ENCODE measurements at regions of chr16 and their contacts with region 1.

Region 1: DNA sequence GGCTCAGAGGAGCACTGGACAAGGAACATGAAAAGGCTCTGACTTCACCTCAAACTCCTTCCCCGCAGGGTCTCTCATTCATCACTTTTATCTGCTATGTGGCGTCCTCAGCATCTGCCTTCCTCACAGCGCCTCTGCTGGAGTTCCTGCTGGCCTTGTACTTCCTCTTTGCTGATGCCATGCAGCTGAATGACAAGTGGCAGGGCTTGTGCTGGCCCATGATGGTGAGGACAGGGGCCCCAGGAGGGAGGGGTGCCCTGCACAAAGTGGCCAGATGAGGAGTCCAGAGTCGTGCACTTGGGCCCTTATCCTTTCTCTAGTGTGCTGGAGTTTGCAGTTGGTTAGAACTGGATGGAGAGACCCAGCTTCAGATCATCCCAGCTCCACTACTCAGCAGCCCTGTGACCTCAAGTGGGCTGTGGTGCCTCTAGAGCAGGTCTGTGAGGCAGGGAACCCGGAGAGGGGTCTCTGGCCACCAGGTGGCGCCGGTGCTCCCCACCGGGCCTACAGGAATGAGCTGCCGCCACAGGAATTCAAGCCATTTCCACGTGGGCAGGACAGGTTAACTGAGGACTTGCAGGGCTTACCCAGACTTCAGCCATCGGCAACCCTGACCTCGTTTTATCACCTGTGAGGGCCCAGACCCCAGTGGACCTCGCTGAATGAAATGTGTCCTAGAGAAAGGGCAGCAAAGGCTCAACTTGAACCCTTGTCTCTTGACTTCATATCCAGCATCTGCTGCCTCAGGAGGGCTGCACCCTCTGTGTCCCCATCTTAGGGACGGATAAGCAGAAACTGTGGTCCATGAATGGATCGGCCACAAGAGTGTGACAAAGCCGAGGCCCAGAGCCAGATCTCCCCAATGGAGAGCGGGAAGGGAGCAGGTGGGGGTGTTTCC is 4.0 kb downstream of the CMTM3 start:
- DNase-seq: peak; percentile 80 to 92 (median 87)
- ATAC-seq: peak; percentile 44 to 68 (median 56)
- H3K4me3 ChIP-seq: no peak overlapping the region
- H3K27ac ChIP-seq: peak overlapping the region in 4 of 12 donors; percentile 9 to 35 (median 15)
- H3K4me1 ChIP-seq: peaks cover 0 to 41% (median 20%) of the 10 kb centered on the region in 12 donors
- H3K27me3 ChIP-seq: no peaks in the 10 kb centered on the region
- CTCF ChIP-seq: peak; percentile 84 to 95 (median 90)
- POLR2A ChIP-seq: no peak

Region 2: GRCh38 chr16:66483689-66484481 is 124.6 kb before region 1 on chr16:
- intact Hi-C with region 1: loop called in 1 of 10 experiments (anchors 5 kb)
- DNase-seq: peak; percentile 77 to 92 (median 80)
- ATAC-seq: peak; percentile 66 to 84 (median 77)
- H3K4me3 ChIP-seq: no peak overlapping the region
- H3K27ac ChIP-seq: no peak overlapping the region
- H3K4me1 ChIP-seq: peaks cover 0 to 30% (median 10%) of the 10 kb centered on the region in 12 donors
- H3K27me3 ChIP-seq: no peaks in the 10 kb centered on the region
- CTCF ChIP-seq: peak; percentile 86 to 97 (median 93)
- POLR2A ChIP-seq: no peak

Region 3: DNA sequence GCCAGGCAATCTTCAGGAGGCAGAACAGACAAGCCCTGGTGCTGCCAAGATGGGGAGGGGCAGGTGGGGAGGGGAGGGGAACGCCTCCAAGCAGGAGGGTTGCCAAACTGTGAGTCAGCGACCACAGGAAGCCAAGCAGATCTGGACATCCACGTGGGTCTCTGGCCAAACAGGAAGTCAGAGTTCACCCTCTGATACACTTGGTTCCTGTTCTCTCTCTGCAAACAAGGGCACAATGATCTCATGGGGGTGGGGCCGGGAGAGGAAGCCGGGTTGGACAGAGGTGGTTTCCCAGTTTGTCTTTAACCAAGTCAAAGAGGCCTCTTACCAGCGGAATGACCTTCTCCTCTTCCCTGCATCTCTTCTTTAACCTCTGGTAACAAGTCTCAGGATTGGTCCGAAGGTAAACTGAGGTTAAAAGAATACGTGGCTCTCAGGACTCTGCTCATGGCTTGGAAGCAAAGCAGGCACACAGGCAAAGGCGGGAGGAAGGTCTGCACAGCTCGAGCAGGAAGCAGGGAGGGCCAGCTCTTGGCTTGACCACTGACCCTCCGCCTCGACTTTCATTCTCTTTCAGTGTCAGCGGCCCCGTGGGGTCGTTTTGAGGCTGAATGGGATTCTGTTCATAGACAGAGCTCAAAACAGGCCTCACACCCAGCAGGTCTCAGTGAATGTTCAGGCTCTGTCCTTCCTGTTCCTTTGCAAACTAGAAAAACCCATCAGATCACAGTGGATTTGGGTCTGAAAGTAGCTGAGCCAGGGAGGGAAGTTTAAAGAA is 91.5 kb before region 1 on chr16:
- intact Hi-C with region 1: loop called in 1 of 10 experiments (anchors 5 kb)
- DNase-seq: peak; percentile 97 to 99 (median 98)
- ATAC-seq: peak; percentile 95 to 96 (median 96)
- H3K4me3 ChIP-seq: peak overlapping the region in 10 of 12 donors; percentile 21 to 50 (median 30)
- H3K27ac ChIP-seq: peak overlapping the region; percentile 89 to 100 (median 97)
- H3K4me1 ChIP-seq: peaks cover 18 to 87% (median 67%) of the 10 kb centered on the region in 12 donors
- H3K27me3 ChIP-seq: no peaks in the 10 kb centered on the region
- CTCF ChIP-seq: no peak
- POLR2A ChIP-seq: peak in 1 of 2 donors; percentile 69

Region 4: DNA sequence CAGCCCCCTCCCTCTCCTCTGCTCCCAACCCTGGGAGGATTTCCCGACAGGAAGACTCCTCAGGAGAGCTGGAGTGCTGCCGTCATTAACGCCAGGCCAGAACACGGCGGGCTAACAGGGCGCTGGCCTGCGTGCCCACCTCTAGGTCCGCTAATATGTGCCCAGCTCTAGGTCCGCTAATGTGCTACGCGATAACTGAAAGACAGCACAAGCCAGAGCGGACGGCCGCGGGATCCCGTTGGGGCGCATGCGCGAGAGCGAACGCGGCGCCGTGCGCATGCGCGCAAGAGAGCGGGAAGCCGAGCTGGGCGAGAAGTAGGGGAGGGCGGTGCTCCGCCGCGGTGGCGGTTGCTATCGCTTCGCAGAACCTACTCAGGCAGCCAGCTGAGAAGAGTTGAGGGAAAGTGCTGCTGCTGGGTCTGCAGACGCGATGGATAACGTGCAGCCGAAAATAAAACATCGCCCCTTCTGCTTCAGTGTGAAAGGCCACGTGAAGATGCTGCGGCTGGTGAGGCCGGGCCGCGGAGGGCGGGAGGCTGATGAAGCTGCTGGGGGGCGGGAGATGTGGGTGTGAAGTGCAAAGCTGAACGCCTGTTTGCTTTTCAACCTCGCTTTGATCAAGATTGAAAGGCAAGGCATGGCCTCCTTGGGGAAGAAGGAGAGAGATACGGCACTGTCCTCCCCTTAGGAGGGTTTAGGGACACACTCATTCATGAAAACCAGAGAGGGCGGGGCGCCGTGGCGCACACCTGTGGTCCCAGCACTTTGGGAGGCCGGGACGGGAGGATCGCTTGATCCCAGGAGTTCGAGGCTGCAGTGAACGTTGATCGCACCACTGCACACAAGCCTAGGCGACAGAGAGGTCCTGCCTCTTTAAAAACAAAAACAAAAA is 56.0 kb before region 1 on chr16 and contains the start of gene CKLF:
- intact Hi-C with region 1: loop called in 6 of 10 experiments (anchors 2 to 10 kb)
- DNase-seq: peak; percentile 88 to 96 (median 91)
- ATAC-seq: peak; percentile 77 to 91 (median 84)
- H3K4me3 ChIP-seq: peak within 1 kb of the TSS; percentile 49 to 78 (median 64)
- H3K27ac ChIP-seq: peak within 1 kb of the TSS; percentile 84 to 99 (median 93)
- H3K4me1 ChIP-seq: peaks cover 0 to 81% (median 45%) of the 10 kb centered on the region in 12 donors
- H3K27me3 ChIP-seq: no peaks in the 10 kb centered on the region
- CTCF ChIP-seq: no peak
- POLR2A ChIP-seq: peak in 1 of 2 donors; percentile 77
- total RNA-seq, gene CKLF: 4.1 to 28.9 (median 6.4) TPM

Region 5: GRCh38 chr16:66562407-66562806 is 46.1 kb before region 1 on chr16:
- intact Hi-C with region 1: loop called in 2 of 10 experiments (anchors 5 to 10 kb)
- DNase-seq: no peak
- ATAC-seq: no peak
- H3K4me3 ChIP-seq: no peak overlapping the region
- H3K27ac ChIP-seq: peak overlapping the region in 1 of 12 donors; percentile 0
- H3K4me1 ChIP-seq: peaks cover 0 to 20% (median 0%) of the 10 kb centered on the region in 12 donors
- H3K27me3 ChIP-seq: no peaks in the 10 kb centered on the region
- CTCF ChIP-seq: peak in 5 of 12 donors; percentile 8 to 29 (median 23)
- POLR2A ChIP-seq: no peak

Region 6: GRCh38 chr16:66650707-66651473 is 42.4 kb after region 1 on chr16:
- intact Hi-C with region 1: no loop called
- DNase-seq: peak; percentile 71 to 82 (median 76)
- ATAC-seq: peak; percentile 71 to 96 (median 91)
- H3K4me3 ChIP-seq: peak overlapping the region in 6 of 12 donors; percentile 3 to 41 (median 33)
- H3K27ac ChIP-seq: no peak overlapping the region
- H3K4me1 ChIP-seq: peaks cover 0 to 36% (median 7%) of the 10 kb centered on the region in 12 donors
- H3K27me3 ChIP-seq: no peaks in the 10 kb centered on the region
- CTCF ChIP-seq: peak; percentile 82 to 97 (median 93)
- POLR2A ChIP-seq: no peak

Region 7: GRCh38 chr16:66677179-66677578 is 68.7 kb after region 1 on chr16:
- intact Hi-C with region 1: no loop called
- DNase-seq: no peak
- ATAC-seq: no peak
- H3K4me3 ChIP-seq: no peak overlapping the region
- H3K27ac ChIP-seq: no peak overlapping the region
- H3K4me1 ChIP-seq: peaks cover 0 to 6% (median 0%) of the 10 kb centered on the region in 12 donors
- H3K27me3 ChIP-seq: no peaks in the 10 kb centered on the region
- CTCF ChIP-seq: no peak
- POLR2A ChIP-seq: no peak

Region 8: GRCh38 chr16:66859397-66860068 is 251.0 kb after region 1 on chr16:
- intact Hi-C with region 1: loop called in 2 of 10 experiments (anchors 5 to 10 kb)
- DNase-seq: no peak
- ATAC-seq: peak in 1 of 4 donors; percentile 14
- H3K4me3 ChIP-seq: no peak overlapping the region
- H3K27ac ChIP-seq: no peak overlapping the region
- H3K4me1 ChIP-seq: peaks cover 0 to 8% (median 0%) of the 10 kb centered on the region in 12 donors
- H3K27me3 ChIP-seq: no peaks in the 10 kb centered on the region
- CTCF ChIP-seq: no peak
- POLR2A ChIP-seq: no peak

Region 9: DNA sequence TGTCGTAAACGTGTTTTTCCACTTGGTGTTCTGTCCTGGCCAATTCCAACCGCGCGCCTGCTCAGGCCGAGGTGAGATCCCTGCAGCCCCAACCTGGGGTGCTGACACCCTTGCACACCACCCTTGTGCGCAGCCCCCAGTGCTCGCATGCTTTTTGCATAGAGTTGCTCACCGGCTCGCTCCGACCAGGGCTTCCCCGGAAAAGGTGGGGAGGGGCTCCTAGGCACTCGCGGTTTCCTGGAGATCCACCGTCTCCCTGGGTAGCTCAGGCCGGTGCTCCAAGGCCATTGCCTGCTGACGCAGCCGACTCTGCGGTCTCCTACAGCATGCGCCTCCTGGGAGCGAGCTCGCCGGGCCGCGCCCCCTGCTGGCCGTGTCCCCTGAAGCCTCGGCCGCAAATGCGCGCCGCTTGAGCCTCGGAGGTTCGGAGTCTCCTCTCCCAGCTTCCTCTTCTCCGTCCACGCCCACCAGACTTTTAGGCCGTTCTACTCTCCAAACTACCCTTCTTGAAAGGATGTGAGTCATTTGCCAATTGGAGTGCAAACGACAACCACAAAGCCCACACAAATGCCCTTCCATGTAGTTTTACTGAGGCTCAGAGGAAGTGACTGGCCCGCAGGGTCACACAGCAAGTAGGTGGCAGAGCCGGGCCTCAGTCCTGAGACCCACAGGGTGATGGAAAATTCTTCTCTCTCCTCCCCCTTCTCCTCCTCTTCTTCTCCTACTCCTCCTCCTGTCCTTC is 264.6 kb after region 1 on chr16:
- intact Hi-C with region 1: loop called in 7 of 10 experiments (anchors 5 to 10 kb)
- DNase-seq: peak; percentile 90 to 96 (median 93)
- ATAC-seq: peak; percentile 84 to 96 (median 96)
- H3K4me3 ChIP-seq: peak overlapping the region in 10 of 12 donors; percentile 27 to 58 (median 46)
- H3K27ac ChIP-seq: peak overlapping the region in 7 of 12 donors; percentile 7 to 77 (median 49)
- H3K4me1 ChIP-seq: peaks cover 0 to 25% (median 5%) of the 10 kb centered on the region in 12 donors
- H3K27me3 ChIP-seq: no peaks in the 10 kb centered on the region
- CTCF ChIP-seq: peak; percentile 86 to 99 (median 94)
- POLR2A ChIP-seq: no peak